AG04450 (cell line): ENCODE measurements at regions of chr22 and their contacts with region 1.

Region 1: GRCh38 chr22:22692707-22693530 is 48.5 kb downstream of the GGTLC2 start:
- DNase-seq: no peak
- H3K4me3 ChIP-seq: no peak overlapping the region
- H3K27ac ChIP-seq: no peak overlapping the region
- H3K27me3 ChIP-seq: peaks cover 7% of the 10 kb centered on the region
- CTCF ChIP-seq: peak; percentile 44

Region 2: GRCh38 chr22:22710719-22711531 is 18.0 kb after region 1 on chr22:
- CTCF ChIA-PET with region 1: interaction called, 10 read pairs
- POLR2A ChIA-PET with region 1: no interaction called
- DNase-seq: no peak
- H3K4me3 ChIP-seq: no peak overlapping the region
- H3K27ac ChIP-seq: no peak overlapping the region
- H3K27me3 ChIP-seq: peaks cover 5% of the 10 kb centered on the region
- CTCF ChIP-seq: peak; percentile 86

Region 3: GRCh38 chr22:22893077-22893805 is 200.3 kb after region 1 on chr22:
- CTCF ChIA-PET with region 1: no interaction called
- POLR2A ChIA-PET with region 1: no interaction called
- DNase-seq: no peak
- H3K4me3 ChIP-seq: no peak overlapping the region
- H3K27ac ChIP-seq: no peak overlapping the region
- H3K27me3 ChIP-seq: peaks cover 2% of the 10 kb centered on the region
- CTCF ChIP-seq: no peak

Region 4: DNA sequence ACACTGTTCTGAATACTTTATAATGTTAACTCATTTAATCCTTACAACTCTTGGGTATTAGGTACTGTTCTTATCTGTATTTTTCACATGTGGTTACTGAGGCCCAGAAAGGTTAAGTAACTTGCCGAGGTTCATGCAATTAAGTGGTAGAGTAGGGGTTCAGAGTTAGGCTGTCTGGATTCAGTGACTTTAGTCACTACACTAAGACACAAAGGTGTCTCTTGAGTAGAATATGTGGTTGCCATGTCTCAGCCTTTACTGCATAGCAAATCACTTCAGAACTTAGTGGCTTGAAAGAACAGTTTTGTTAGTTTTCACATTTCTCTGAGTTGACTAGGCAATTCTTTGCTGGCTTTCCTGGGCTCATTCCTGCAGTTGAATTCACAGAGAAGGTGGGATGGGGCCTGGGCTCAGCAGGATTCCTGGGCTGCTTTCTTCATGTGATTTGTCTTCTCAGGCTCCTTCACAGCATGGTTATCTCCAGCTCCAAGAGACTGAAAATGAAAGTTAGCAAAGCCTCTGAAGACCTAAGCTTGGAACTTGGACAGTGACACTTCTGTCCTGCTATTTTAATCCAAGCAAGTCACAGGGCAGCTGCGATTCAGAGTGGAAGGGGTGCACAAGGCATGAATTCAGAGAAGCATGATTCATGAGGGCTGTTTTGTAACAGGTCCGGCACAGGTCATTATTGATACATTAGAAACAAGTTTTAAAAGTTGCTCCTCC is 1646.0 kb after region 1 on chr22:
- CTCF ChIA-PET with region 1: no interaction called
- POLR2A ChIA-PET with region 1: no interaction called
- DNase-seq: no peak
- H3K4me3 ChIP-seq: no peak overlapping the region
- H3K27ac ChIP-seq: no peak overlapping the region
- H3K27me3 ChIP-seq: no peaks in the 10 kb centered on the region
- CTCF ChIP-seq: no peak